ENCODE measurements at regions of chr16 and their contacts with region 1.

Region 1: DNA sequence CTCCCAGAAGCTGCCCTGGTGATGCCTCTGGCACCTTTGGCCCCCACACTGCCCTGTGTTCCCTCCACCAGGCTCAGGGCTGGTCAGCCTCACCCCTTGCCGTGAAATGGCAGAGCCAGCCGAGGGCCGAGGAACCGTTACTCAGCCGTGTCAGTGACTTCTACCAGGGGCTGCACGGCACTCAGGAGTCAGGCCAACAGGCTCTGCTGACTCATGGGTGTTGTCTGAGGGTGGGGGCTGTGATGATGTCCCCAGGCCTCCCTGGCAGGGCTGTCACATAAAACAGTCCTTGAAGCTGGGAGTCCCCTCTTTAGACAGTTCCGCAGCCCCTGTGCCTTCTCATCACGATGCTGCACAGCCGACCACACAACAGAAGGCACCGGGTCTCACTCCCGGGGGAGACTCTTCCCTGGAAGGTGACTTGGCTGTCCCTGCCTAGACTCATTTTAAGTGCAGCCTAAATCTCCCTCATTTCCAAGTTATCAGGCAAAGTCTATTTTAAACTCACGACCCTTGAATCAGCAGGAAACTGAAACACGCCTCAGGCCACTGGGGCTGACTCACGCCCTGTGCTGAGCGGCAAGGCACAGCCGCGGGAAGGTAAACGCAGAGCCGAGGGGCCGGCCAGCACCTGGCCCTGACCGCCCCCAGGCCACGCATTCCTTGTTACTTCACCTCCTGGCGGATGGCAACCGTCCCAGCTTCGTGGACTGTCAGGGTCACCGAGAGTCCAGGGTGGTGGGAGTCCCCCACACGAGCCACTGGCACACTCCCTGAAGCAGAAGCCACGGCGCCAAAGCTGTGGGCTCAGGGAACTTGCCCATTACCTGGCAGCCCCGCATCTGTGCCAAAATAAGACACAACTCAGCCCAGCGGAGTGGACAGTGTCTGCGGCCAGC is 102.6 kb downstream of the ZNF778 start:
- DNase-seq: peak in 1 of 2 donors; percentile 83
- H3K4me3 ChIP-seq: peak overlapping the region; percentile 18 to 40
- H3K27ac ChIP-seq: peak overlapping the region; percentile 81 to 85
- H3K4me1 ChIP-seq: peaks cover 20 to 55% of the 10 kb centered on the region in 2 donors
- H3K27me3 ChIP-seq: no peaks in the 10 kb centered on the region
- CTCF ChIP-seq: no peak

Region 2: GRCh38 chr16:88479793-88480760 is 840.1 kb before region 1 on chr16:
- intact Hi-C with region 1: no loop called
- DNase-seq: no peak
- H3K4me3 ChIP-seq: no peak overlapping the region
- H3K27ac ChIP-seq: no peak overlapping the region
- H3K4me1 ChIP-seq: no peaks in the 10 kb centered on the region
- H3K27me3 ChIP-seq: no peaks in the 10 kb centered on the region
- CTCF ChIP-seq: no peak

Region 3: DNA sequence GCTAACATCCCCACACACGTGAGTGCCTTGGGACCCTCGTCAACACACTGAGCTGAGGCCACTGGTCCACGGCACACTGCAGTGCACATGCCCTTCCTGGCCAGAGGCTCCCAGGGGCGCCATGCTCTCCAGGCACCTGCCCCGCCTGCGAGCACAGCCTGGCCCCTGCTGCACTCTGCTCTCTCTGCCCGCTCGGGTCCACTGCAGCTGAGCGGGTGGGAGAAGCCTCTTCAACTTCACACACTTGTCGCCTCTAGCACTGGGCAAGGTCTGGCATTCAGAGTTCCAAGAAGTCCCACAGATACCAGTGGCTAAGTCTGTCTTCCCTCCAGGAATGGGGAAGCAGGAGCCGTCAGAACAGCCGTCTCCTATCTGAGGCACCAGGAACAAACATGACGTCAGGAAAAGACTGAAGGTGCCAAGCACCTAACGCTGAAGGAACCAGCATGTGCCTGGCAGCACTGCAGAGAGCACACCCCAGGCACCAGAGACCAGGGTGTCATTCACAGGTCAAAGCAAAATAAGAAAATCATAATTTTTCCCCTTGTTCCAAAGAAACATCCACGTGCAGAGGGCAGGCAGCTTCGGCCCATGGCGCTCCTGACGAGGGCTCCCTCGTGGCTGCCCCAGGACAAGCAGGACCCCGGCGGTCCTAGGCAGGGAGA is 19.7 kb before region 1 on chr16:
- intact Hi-C with region 1: loop called (anchors 1 kb)
- DNase-seq: peak in 1 of 2 donors; percentile 83
- H3K4me3 ChIP-seq: peak overlapping the region in 1 of 2 donors; percentile 11
- H3K27ac ChIP-seq: peak overlapping the region; percentile 83 to 91
- H3K4me1 ChIP-seq: peaks cover 17 to 24% of the 10 kb centered on the region in 2 donors
- H3K27me3 ChIP-seq: no peaks in the 10 kb centered on the region
- CTCF ChIP-seq: no peak

Region 4: DNA sequence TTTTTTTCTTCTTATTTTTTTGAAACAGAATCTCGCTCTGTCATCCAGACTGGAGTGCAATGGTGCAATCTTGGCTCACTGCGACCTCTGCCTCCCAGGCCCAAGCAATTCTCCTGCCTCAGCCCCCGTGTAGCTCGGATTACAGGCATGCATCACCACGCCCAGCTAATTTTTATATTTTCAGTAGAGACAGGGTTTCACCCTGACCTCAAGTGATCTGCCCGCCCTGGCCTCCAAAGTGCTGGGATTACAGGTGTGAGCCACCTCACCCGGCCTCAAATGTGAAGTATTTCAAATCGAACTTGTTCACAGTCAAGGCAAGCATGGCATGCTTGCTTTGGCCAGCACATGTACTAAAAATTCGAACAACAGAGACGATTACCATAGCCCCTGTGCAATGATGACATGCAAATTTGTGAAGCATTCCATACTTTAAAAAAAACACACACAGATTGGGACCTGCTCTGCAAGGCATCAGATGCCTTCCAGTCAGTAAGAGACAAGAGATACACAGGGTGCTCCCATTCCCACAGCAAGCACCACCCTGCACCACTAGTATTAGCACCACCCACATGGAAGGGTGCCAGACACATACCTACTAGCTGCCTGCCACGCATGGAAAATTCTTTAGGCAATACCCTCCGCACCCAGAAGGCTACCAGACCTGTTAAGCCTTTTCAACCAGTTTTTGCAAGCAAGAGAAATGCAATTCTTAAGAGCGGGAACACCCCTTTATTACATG is 123.0 kb after region 1 on chr16:
- intact Hi-C with region 1: loop called (anchors 5 kb)
- DNase-seq: peak in 1 of 2 donors; percentile 72
- H3K4me3 ChIP-seq: peak overlapping the region in 1 of 2 donors; percentile 8
- H3K27ac ChIP-seq: peak overlapping the region; percentile 70 to 79
- H3K4me1 ChIP-seq: peaks cover 11 to 50% of the 10 kb centered on the region in 2 donors
- H3K27me3 ChIP-seq: no peaks in the 10 kb centered on the region
- CTCF ChIP-seq: peak in 1 of 3 experiments; percentile 17